H1 (cell line): ENCODE measurements at regions of chr6 and their contacts with region 1.

Region 1: DNA sequence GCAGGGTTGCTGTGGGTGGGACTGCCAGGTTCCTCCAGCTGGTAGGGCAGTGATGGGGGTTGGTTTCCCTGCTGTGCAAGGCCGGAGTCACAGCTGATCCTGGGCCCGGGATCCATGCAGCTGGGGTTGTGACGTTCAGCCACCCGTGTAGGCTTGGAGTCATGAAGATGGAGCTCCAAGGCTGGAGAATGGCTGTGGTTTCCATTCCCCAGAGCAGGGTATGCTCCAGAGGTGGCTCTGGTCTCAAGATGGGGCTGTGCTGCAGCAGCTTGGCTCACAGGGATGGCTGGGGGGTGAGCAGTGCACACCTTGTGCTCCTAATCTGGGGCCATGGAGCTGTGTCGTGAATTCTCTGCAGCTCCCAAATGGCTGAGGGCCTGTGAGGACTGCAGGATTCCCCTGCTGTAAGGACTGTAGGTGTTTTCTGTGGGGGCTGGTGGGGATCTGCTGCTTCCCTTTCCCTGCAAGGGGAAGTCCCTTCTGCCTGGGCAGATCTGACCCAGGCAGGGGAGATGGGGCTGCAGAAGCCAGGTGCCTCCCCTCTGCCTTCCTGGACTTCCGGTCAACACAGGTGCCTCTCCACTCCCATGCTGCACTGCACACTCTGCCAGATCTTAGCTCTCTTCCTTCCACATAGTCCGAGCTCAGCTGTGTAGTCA is 15.9 kb downstream of the KIF25 start:
- DNase-seq: peak in 1 of 2 experiments; percentile 20
- H3K4me3 ChIP-seq: no peak overlapping the region
- H3K27ac ChIP-seq: no peak overlapping the region
- H3K4me1 ChIP-seq: peaks cover 0 to 7% (median 2%) of the 10 kb centered on the region in 4 experiments; a peak in 3 of 7 replicates
- H3K27me3 ChIP-seq: no peaks in the 10 kb centered on the region
- CTCF ChIP-seq: no peak
- EP300 ChIP-seq: no peak
- POLR2A ChIP-seq: no peak
- RAD21 ChIP-seq: no peak

Region 2: GRCh38 chr6:167811442-167812087 is 201.8 kb before region 1 on chr6:
- CTCF ChIA-PET with region 1: no interaction called
- POLR2A ChIA-PET with region 1: no interaction called
- DNase-seq: peak in 1 of 2 experiments; percentile 24
- H3K4me3 ChIP-seq: no peak overlapping the region
- H3K27ac ChIP-seq: no peak overlapping the region
- H3K4me1 ChIP-seq: peaks cover 0 to 4% (median 0%) of the 10 kb centered on the region in 4 experiments; a peak in 1 of 7 replicates
- H3K27me3 ChIP-seq: no peaks in the 10 kb centered on the region
- CTCF ChIP-seq: no peak
- EP300 ChIP-seq: no peak
- POLR2A ChIP-seq: no peak
- RAD21 ChIP-seq: no peak

Region 3: DNA sequence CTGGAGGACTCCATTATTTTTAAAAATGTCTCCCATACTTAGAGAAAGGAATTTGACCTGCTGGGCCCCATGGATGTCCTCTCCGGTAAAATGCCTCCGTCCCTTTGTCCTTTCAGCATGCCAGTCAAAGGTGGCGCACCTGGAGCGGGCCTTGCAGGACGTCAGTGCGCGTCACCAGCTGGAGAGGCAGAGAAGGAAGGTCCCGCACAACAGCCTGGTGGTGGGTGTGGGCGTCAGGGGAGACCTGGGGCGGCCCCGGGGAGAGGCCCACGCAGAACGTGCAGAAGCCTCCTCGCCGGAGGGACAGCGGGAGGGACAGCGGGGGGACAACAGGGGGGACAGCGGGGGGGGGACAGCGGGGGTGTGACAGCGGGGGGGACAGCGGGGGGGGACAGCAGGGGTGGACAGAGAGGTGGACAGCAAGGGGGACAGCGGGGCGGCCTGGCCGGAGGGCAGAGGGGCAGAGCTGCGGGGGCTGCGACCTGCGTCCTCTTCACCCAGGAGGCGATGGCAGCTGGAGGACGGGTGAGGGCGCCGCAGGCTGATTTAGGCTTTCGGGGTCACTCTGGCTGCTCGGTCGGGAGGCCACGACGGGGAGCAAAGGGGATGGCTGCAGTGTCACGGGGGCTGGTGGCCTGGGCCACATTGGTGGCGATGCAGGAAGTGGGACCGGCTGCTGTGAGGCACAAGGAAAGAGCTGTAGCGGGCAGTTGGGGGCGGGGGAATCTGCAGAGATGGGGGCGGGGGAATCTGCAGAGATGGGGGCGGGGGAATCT is 16.8 kb before region 1 on chr6:
- CTCF ChIA-PET with region 1: interaction called, 10 read pairs
- POLR2A ChIA-PET with region 1: interaction called, 4 read pairs
- DNase-seq: peak; percentile 10 to 79
- H3K4me3 ChIP-seq: 0 out of 8 replicates have a peak overlapping the region, but pooled peaks of 1 of the 4 experiments have one; percentile 32
- H3K27ac ChIP-seq: no peak overlapping the region
- H3K4me1 ChIP-seq: peaks cover 0 to 13% (median 3%) of the 10 kb centered on the region in 4 experiments; a peak in 6 of 7 replicates
- H3K27me3 ChIP-seq: no peaks in the 10 kb centered on the region
- CTCF ChIP-seq: peak; percentile 55 to 66 (median 63)
- EP300 ChIP-seq: no peak
- POLR2A ChIP-seq: no peak
- RAD21 ChIP-seq: peak; percentile 73 to 78

Region 4: GRCh38 chr6:168060521-168060931 is 47.1 kb after region 1 on chr6:
- CTCF ChIA-PET with region 1: no interaction called
- POLR2A ChIA-PET with region 1: no interaction called
- DNase-seq: no peak
- H3K4me3 ChIP-seq: no peak overlapping the region
- H3K27ac ChIP-seq: no peak overlapping the region
- H3K4me1 ChIP-seq: no peaks in the 10 kb centered on the region
- H3K27me3 ChIP-seq: no peaks in the 10 kb centered on the region
- CTCF ChIP-seq: peak in 2 of 3 experiments; percentile 82 to 92; a peak in 3 of 4 replicates
- EP300 ChIP-seq: no peak
- POLR2A ChIP-seq: no peak
- RAD21 ChIP-seq: peak; percentile 90 to 93